Caco-2 (cell line): ENCODE measurements at regions of chr12 and their contacts with region 1.

Region 1: GRCh38 chr12:9331218-9331626 is 123.0 kb upstream of the PZP start:
- DNase-seq: peak in 1 of 2 experiments; percentile 80
- H3K4me3 ChIP-seq: no peak overlapping the region
- H3K4me3 Mint-ChIP-seq: no peak overlapping the region
- H3K27ac Mint-ChIP-seq: no peak overlapping the region
- H3K4me1 ChIP-seq: peaks cover 13% of the 10 kb centered on the region
- H3K4me1 Mint-ChIP-seq: peaks cover 6% of the 10 kb centered on the region
- H3K27me3 ChIP-seq: no peaks in the 10 kb centered on the region
- H3K27me3 Mint-ChIP-seq: peaks cover 3% of the 10 kb centered on the region
- CTCF ChIP-seq: peak; percentile 96 to 98

Region 2: DNA sequence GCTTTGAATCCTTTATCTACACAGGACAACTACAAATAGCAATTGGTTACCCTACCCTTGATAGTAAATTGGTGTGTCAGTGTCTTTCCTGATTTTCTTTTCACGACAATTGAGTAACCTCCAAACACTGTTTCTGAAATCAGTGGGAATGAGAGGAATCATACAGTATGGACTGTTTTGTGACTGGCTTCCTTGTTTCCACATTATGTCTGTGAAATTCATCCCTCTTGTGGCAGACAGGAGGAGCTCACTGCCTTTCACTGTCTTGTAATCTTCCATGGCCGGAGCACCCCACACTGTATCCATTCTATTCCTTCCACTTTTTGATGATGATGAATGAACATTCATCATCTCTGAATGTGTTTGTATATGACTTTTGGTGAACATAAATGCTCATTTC is 41.0 kb after region 1 on chr12:
- CTCF ChIA-PET with region 1: interaction called, 25 read pairs
- POLR2A ChIA-PET with region 1: no interaction called
- intact Hi-C with region 1: loop called (anchors 1 kb)
- DNase-seq: peak in 1 of 2 experiments; percentile 33
- H3K4me3 ChIP-seq: no peak overlapping the region
- H3K4me3 Mint-ChIP-seq: no peak overlapping the region
- H3K27ac Mint-ChIP-seq: no peak overlapping the region
- H3K4me1 ChIP-seq: no peaks in the 10 kb centered on the region
- H3K4me1 Mint-ChIP-seq: no peaks in the 10 kb centered on the region
- H3K27me3 ChIP-seq: no peaks in the 10 kb centered on the region; the same call in 1 of the 2 replicates
- H3K27me3 Mint-ChIP-seq: peaks cover 21% of the 10 kb centered on the region
- CTCF ChIP-seq: peak; percentile 25 to 59

Region 3: GRCh38 chr12:9464408-9464807 is 133.2 kb after region 1 on chr12:
- CTCF ChIA-PET with region 1: interaction called, 16 read pairs
- POLR2A ChIA-PET with region 1: no interaction called
- intact Hi-C with region 1: loop called (anchors 1 kb)
- DNase-seq: no peak
- H3K4me3 ChIP-seq: no peak overlapping the region
- H3K4me3 Mint-ChIP-seq: no peak overlapping the region
- H3K27ac Mint-ChIP-seq: no peak overlapping the region
- H3K4me1 ChIP-seq: 0 out of 2 replicates have a peak, but pooled peaks cover 5% of the 10 kb centered on the region
- H3K4me1 Mint-ChIP-seq: peaks cover 15% of the 10 kb centered on the region
- H3K27me3 ChIP-seq: no peaks in the 10 kb centered on the region
- H3K27me3 Mint-ChIP-seq: no peaks in the 10 kb centered on the region
- CTCF ChIP-seq: no peak

Region 4: GRCh38 chr12:9604287-9604686 is 273.1 kb after region 1 on chr12:
- CTCF ChIA-PET with region 1: no interaction called
- POLR2A ChIA-PET with region 1: no interaction called
- intact Hi-C with region 1: loop called (anchors 10 kb)
- DNase-seq: no peak
- H3K4me3 ChIP-seq: no peak overlapping the region
- H3K4me3 Mint-ChIP-seq: no peak overlapping the region
- H3K27ac Mint-ChIP-seq: no peak overlapping the region
- H3K4me1 ChIP-seq: peaks cover 20% of the 10 kb centered on the region
- H3K4me1 Mint-ChIP-seq: peaks cover 21% of the 10 kb centered on the region
- H3K27me3 ChIP-seq: no peaks in the 10 kb centered on the region
- H3K27me3 Mint-ChIP-seq: no peaks in the 10 kb centered on the region
- CTCF ChIP-seq: no peak

Region 5: GRCh38 chr12:9707864-9708808 is 376.9 kb after region 1 on chr12:
- CTCF ChIA-PET with region 1: interaction called, 3 read pairs
- POLR2A ChIA-PET with region 1: no interaction called
- intact Hi-C with region 1: loop called (anchors 1 kb)
- DNase-seq: peak; percentile 54 to 64
- H3K4me3 ChIP-seq: no peak overlapping the region
- H3K4me3 Mint-ChIP-seq: no peak overlapping the region
- H3K27ac Mint-ChIP-seq: no peak overlapping the region
- H3K4me1 ChIP-seq: peaks cover 4% of the 10 kb centered on the region
- H3K4me1 Mint-ChIP-seq: peaks cover 9% of the 10 kb centered on the region
- H3K27me3 ChIP-seq: no peaks in the 10 kb centered on the region
- H3K27me3 Mint-ChIP-seq: no peaks in the 10 kb centered on the region
- CTCF ChIP-seq: peak; percentile 96 to 98

Region 6: GRCh38 chr12:9797722-9798619 is 466.7 kb after region 1 on chr12:
- CTCF ChIA-PET with region 1: no interaction called
- POLR2A ChIA-PET with region 1: no interaction called
- intact Hi-C with region 1: loop called (anchors 1 kb)
- DNase-seq: peak; percentile 87 to 88
- H3K4me3 ChIP-seq: no peak overlapping the region
- H3K4me3 Mint-ChIP-seq: no peak overlapping the region
- H3K27ac Mint-ChIP-seq: no peak overlapping the region
- H3K4me1 ChIP-seq: no peaks in the 10 kb centered on the region
- H3K4me1 Mint-ChIP-seq: no peaks in the 10 kb centered on the region
- H3K27me3 ChIP-seq: no peaks in the 10 kb centered on the region
- H3K27me3 Mint-ChIP-seq: peaks cover 12% of the 10 kb centered on the region
- CTCF ChIP-seq: peak; percentile 67 to 84